Body of pancreas (tissue), 4 donors: ENCODE measurements at regions of chr10 and their contacts with region 1.

Region 1: DNA sequence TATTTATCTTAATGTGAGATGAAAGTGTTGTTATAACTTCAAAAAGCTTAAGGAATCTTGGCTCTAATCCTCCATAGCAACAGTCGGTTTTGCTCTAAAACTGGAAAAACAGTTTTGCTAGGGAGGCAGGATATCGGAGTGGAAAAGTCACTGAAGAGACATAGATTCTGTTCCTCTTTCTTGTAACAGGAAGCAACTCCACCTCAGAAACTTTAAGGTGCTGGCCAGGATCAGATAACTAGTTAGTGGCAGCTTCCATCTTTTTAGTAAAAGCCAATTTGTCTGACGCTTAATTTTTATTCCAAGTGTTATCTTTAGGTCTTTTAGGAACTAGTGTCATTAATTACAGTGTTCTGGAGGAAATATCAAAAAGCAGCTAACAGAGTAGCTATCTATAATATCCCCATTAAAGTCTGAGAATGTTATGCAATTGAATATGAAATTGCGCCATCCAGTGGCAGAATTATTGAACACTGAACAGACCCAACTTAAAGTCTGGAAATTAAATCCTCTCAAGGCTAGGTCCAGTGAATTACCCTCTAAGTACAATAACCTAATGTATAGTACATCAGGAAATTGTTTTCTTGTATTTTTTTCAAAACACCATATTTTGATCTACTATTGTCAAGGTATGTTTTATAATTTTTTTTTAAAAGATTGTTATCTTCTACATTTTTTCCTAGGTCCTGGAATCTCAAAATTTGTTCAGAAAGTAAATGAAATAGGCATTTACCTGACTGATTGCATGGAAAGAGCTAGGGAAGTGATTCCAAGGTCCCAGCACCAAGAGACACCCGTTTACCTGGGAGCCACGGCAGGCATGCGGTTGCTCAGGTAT is 65.9 kb upstream of the CC2D2B start:
- DNase-seq: peak; percentile 22 to 61 (median 33)
- ATAC-seq: no peak
- H3K4me3 ChIP-seq: no peak overlapping the region
- H3K27ac ChIP-seq: no peak overlapping the region
- H3K4me1 ChIP-seq: no peaks in the 10 kb centered on the region
- H3K27me3 ChIP-seq: no peaks in the 10 kb centered on the region
- CTCF ChIP-seq: peak in 6 of 7 experiments; percentile 38 to 66 (median 59)
- POLR2A ChIP-seq: no peak

Region 2: GRCh38 chr10:95675403-95676112 is 166.3 kb before region 1 on chr10:
- intact Hi-C with region 1: no loop called
- DNase-seq: no peak
- ATAC-seq: peak; percentile 91
- H3K4me3 ChIP-seq: no peak overlapping the region
- H3K27ac ChIP-seq: peak overlapping the region in 2 of 4 donors; percentile 8 to 31
- H3K4me1 ChIP-seq: peaks cover 10% of the 10 kb centered on the region
- H3K27me3 ChIP-seq: no peaks in the 10 kb centered on the region
- CTCF ChIP-seq: no peak
- POLR2A ChIP-seq: no peak

Region 3: GRCh38 chr10:95706986-95707385 is 134.9 kb before region 1 on chr10:
- intact Hi-C with region 1: loop called (anchors 10 kb)
- DNase-seq: no peak
- ATAC-seq: no peak
- H3K4me3 ChIP-seq: no peak overlapping the region
- H3K27ac ChIP-seq: no peak overlapping the region
- H3K4me1 ChIP-seq: no peaks in the 10 kb centered on the region
- H3K27me3 ChIP-seq: no peaks in the 10 kb centered on the region
- CTCF ChIP-seq: no peak
- POLR2A ChIP-seq: no peak

Region 4: DNA sequence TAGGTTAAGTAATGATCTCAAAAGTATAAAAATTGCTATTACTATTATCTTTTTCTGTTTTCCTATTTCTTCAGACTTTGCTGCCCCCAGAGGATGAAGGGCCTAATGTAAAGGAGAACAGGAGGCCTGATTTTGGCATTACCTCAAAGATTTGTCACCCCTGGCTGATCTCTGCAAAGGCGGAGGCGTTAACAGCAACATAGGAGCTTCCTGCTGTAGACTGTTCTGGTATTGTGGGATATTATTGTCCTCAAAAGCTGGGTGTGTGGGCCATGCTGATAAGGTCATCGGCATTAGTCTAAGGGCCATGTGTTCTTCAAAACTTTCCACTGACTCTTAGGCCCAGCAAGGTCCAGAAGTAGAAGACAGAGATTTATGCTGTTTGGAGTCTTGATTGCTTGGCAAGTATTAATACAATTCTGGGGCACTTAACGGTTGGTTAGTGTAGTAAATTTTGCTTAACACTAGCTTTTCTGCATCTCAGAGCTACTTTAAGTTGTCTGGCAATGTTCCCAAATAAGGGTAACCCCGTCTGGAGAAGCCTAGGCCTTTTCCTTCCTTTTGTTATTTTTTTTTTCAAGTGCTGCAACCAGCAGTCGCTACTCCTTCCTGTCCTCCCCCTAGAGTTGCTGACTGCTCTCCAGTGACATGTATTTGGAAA is 99.9 kb before region 1 on chr10:
- intact Hi-C with region 1: no loop called
- DNase-seq: peak in 1 of 4 donors; percentile 23
- ATAC-seq: peak; percentile 50
- H3K4me3 ChIP-seq: no peak overlapping the region
- H3K27ac ChIP-seq: peak overlapping the region in 1 of 4 donors; percentile 57
- H3K4me1 ChIP-seq: peaks cover 11% of the 10 kb centered on the region
- H3K27me3 ChIP-seq: no peaks in the 10 kb centered on the region
- CTCF ChIP-seq: no peak
- POLR2A ChIP-seq: no peak